ENCODE measurements at regions of chr5 and their contacts with region 1.

Region 1: GRCh38 chr5:65708145-65708544 is 13.8 kb downstream of the SGTB start:
- DNase-seq: no peak
- H3K27ac ChIP-seq: no peak overlapping the region
- CTCF ChIP-seq: no peak

Region 2: DNA sequence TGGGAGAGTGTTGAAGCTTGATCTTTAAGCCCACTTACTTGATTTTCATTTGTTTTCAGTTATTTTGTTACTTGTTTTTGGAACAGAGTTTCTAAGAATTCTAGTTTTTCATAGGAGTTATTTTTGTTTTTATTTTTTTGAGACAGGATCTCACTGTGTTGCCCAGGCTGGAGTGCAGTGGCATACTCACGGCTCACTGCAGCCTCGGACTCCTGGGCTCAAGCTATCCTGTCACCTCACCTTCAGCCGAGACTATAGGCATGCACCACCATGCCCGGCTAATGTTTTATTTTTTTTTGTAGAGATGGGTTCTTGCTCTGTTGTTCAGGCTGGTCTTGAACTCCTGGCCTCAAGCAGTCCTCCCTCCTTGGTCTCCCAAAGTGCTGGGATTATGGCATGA is 224.5 kb after region 1 on chr5:
- CTCF ChIA-PET with region 1: interaction called, 10 read pairs
- POLR2A ChIA-PET with region 1: no interaction called
- DNase-seq: no peak
- H3K27ac ChIP-seq: no peak overlapping the region
- CTCF ChIP-seq: no peak

Measured in RWPE1 (cell line).